Psoas muscle (tissue), 8 donors: ENCODE measurements at regions of chr11 and their contacts with region 1.

Region 1: GRCh38 chr11:9757809-9758636 is 94.1 kb downstream of the SWAP70 start:
- DNase-seq: peak; percentile 89 to 94
- ATAC-seq: peak; percentile 79 to 84 (median 83)
- H3K4me3 ChIP-seq: peak overlapping the region; percentile 71
- H3K27ac ChIP-seq: peak overlapping the region; percentile 90
- H3K4me1 ChIP-seq: peaks cover 21% of the 10 kb centered on the region
- H3K27me3 ChIP-seq: no peaks in the 10 kb centered on the region
- CTCF ChIP-seq: peak; percentile 91

Region 2: GRCh38 chr11:9796854-9797253 is 38.8 kb after region 1 on chr11:
- intact Hi-C with region 1: loop called in 1 of 2 experiments (anchors 5 kb)
- DNase-seq: no peak
- ATAC-seq: peak in 1 of 4 donors; percentile 49
- H3K4me3 ChIP-seq: no peak overlapping the region
- H3K27ac ChIP-seq: peak overlapping the region; percentile 17
- H3K4me1 ChIP-seq: peaks cover 8% of the 10 kb centered on the region
- H3K27me3 ChIP-seq: no peaks in the 10 kb centered on the region
- CTCF ChIP-seq: no peak

Region 3: GRCh38 chr11:9972989-9973388 is 215.0 kb after region 1 on chr11:
- intact Hi-C with region 1: loop called (anchors 2 kb)
- DNase-seq: no peak
- ATAC-seq: peak; percentile 59 to 87 (median 68)
- H3K4me3 ChIP-seq: no peak overlapping the region
- H3K27ac ChIP-seq: no peak overlapping the region
- H3K4me1 ChIP-seq: peaks cover 7% of the 10 kb centered on the region
- H3K27me3 ChIP-seq: no peaks in the 10 kb centered on the region
- CTCF ChIP-seq: peak; percentile 72

Region 4: DNA sequence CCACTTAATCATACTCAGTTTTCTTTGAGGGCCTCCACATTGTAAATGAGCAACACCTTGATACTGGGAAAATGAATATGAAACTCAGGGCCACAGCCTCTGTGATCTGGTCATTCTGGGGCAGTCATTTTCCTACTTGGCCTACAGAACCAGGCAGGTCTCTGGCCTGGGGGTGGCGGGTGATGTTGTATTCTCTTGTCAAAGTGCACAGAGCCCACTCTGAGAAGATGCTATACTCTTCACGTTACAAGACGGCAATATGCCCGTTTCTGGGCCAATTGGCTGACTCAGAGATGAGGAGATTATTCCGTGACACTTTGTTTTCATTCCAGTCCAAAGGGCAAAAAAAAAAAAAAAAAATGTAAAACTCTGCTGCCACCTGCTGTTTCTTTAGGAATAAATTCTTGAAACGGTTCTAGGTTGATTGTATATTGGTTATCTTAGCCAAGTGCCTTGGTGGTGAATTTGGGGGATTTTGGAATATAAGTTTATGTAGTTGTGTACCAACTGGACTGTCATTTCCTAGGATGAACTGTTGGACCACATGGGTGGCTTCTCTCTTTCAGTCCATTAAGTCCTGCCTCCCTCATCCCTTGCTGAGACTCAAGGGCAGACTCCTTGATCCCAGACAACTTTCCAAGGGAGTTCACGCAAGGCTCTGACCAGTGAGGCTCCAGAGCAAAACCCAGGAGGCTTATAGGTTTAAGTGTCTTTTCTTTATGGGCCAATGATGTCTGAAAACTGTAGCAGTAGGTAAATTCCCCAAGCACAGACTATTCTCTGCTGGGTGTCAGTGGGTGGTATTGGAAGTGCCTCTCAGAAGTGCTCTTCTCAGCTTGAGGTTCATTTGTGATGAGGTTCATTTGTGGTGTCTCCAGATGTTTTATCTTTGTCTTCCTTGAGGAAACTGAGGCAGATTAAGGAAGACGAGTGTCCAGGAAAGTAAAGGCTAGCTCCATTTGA is 565.1 kb after region 1 on chr11:
- intact Hi-C with region 1: loop called (anchors 2 to 5 kb)
- DNase-seq: peak; percentile 53 to 70
- ATAC-seq: peak; percentile 56 to 81 (median 58)
- H3K4me3 ChIP-seq: no peak overlapping the region
- H3K27ac ChIP-seq: peak overlapping the region; percentile 56
- H3K4me1 ChIP-seq: peaks cover 22% of the 10 kb centered on the region
- H3K27me3 ChIP-seq: no peaks in the 10 kb centered on the region
- CTCF ChIP-seq: peak; percentile 60